Heart right ventricle (tissue), 16 donors: ENCODE measurements at regions of chr5 and their contacts with region 1.

Region 1: DNA sequence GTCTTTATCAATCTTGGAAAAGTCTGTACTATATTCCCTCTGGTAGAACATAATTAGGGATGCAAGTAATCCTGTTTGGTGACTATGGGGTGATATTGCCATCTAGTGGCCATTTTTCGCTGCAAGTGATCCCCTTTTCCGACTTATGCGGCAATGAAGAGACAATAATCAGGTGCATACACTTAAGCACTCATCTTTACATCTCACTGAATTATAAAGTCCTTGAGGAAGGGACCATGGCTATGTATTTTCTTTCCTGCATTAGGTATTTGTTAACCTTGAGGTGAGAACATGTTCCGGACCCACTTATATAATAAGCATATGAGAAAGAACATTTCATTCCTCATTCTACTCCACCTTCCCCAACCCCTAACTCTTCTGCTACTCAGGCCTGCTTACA is 19.6 kb upstream of the LIX1 start:
- DNase-seq: peak in 1 of 2 donors; percentile 71
- ATAC-seq: peak in 6 of 8 donors; percentile 43 to 77 (median 68)
- H3K4me3 ChIP-seq: no peak overlapping the region
- H3K27ac ChIP-seq: no peak overlapping the region
- H3K4me1 ChIP-seq: peaks cover 0 to 10% (median 0%) of the 10 kb centered on the region in 9 donors
- H3K27me3 ChIP-seq: no peaks in the 10 kb centered on the region
- CTCF ChIP-seq: peak; percentile 70 to 93 (median 89)

Region 2: GRCh38 chr5:96752341-96753016 is 409.6 kb before region 1 on chr5:
- intact Hi-C with region 1: loop called in 6 of 10 experiments (anchors 1 to 10 kb)
- DNase-seq: peak in 1 of 2 donors; percentile 61
- ATAC-seq: no peak
- H3K4me3 ChIP-seq: no peak overlapping the region
- H3K27ac ChIP-seq: peak overlapping the region in 6 of 10 donors; percentile 30 to 70 (median 48)
- H3K4me1 ChIP-seq: peaks cover 0 to 39% (median 9%) of the 10 kb centered on the region in 9 donors
- H3K27me3 ChIP-seq: no peaks in the 10 kb centered on the region
- CTCF ChIP-seq: peak; percentile 59 to 86 (median 73)

Region 3: GRCh38 chr5:96868603-96869371 is 293.3 kb before region 1 on chr5:
- intact Hi-C with region 1: loop called in 8 of 10 experiments (anchors 2 to 5 kb)
- DNase-seq: peak in 1 of 2 donors; percentile 36
- ATAC-seq: peak; percentile 67 to 92 (median 87)
- H3K4me3 ChIP-seq: no peak overlapping the region
- H3K27ac ChIP-seq: no peak overlapping the region
- H3K4me1 ChIP-seq: no peaks in the 10 kb centered on the region
- H3K27me3 ChIP-seq: no peaks in the 10 kb centered on the region
- CTCF ChIP-seq: peak; percentile 75 to 95 (median 86)

Region 4: DNA sequence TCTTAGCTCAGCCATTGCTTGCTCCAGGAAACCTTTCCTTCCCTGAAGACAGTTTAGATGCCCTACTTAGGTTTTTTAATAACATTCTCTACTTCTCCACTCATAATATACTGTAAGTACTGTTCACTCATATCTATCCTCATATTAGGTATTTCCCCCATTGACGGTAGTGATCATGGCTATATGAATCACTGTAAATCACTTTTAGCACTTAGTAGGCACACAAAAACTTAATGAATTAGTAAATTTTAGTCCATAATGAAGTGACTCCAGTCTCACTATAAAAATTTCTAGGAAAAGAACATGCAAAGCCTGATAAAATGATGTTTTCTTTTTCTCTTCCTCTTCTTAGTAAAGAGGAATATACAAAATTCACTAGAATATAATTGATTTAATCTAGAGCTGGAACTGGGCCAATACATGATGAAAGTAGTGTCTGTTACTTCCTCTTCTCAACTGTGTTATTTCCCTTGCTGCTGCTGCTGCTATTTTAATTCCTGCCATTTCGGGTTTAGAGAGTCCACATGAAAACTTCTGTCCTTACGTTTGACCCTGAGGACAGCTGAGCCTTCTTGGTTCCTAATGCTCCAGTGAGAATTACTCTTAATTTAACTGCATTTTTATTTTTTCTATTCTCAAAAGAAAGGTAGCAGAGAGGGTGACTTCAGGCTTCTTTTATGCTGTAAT is 152.7 kb before region 1 on chr5:
- intact Hi-C with region 1: loop called in 1 of 10 experiments (anchors 5 kb)
- DNase-seq: peak in 1 of 2 donors; percentile 9
- ATAC-seq: peak in 7 of 8 donors; percentile 52 to 76 (median 69)
- H3K4me3 ChIP-seq: no peak overlapping the region
- H3K27ac ChIP-seq: peak overlapping the region in 5 of 10 donors; percentile 2 to 35 (median 23)
- H3K4me1 ChIP-seq: peaks cover 0 to 19% (median 11%) of the 10 kb centered on the region in 9 donors
- H3K27me3 ChIP-seq: no peaks in the 10 kb centered on the region
- CTCF ChIP-seq: no peak